ENCODE measurements at regions of chr9 and their contacts with region 1.

Region 1: GRCh38 chr9:128370826-128371621 is at the start of gene URM1:
- DNase-seq: peak; percentile 90 to 98 (median 94)
- ATAC-seq: peak; percentile 94
- H3K4me3 ChIP-seq: peak within 1 kb of the TSS; percentile 93
- H3K4me3 Mint-ChIP-seq: peak within 1 kb of the TSS; percentile 97
- H3K27ac ChIP-seq: peak within 1 kb of the TSS; percentile 68 to 92
- H3K27ac Mint-ChIP-seq: peak within 1 kb of the TSS; percentile 94
- H3K4me1 ChIP-seq: peaks cover 20% of the 10 kb centered on the region
- H3K4me1 Mint-ChIP-seq: peaks cover 34% of the 10 kb centered on the region
- H3K27me3 ChIP-seq: no peaks in the 10 kb centered on the region
- H3K27me3 Mint-ChIP-seq: no peaks in the 10 kb centered on the region
- CTCF ChIP-seq: no peak
- total RNA-seq, gene URM1: 28.4 to 28.8 TPM

Region 2: GRCh38 chr9:128203024-128203706 is 167.9 kb before region 1 on chr9 and contains the start of gene DNM1:
- CTCF ChIA-PET with region 1: no interaction called
- POLR2A ChIA-PET with region 1: no interaction called
- intact Hi-C with region 1: loop called in 1 of 2 experiments (anchors 1 kb)
- DNase-seq: peak; percentile 41 to 91 (median 65)
- ATAC-seq: peak; percentile 98
- H3K4me3 ChIP-seq: peak within 1 kb of the TSS; percentile 55
- H3K4me3 Mint-ChIP-seq: peak within 1 kb of the TSS; percentile 83
- H3K27ac ChIP-seq: no peak within 1 kb of the TSS
- H3K27ac Mint-ChIP-seq: no peak within 1 kb of the TSS
- H3K4me1 ChIP-seq: peaks cover 17% of the 10 kb centered on the region
- H3K4me1 Mint-ChIP-seq: peaks cover 5% of the 10 kb centered on the region
- H3K27me3 ChIP-seq: peaks cover 11 to 17% of the 10 kb centered on the region in 2 experiments
- H3K27me3 Mint-ChIP-seq: peaks cover 9% of the 10 kb centered on the region
- CTCF ChIP-seq: peak; percentile 72
- total RNA-seq, gene DNM1: 1.8 to 2.5 TPM

Region 3: DNA sequence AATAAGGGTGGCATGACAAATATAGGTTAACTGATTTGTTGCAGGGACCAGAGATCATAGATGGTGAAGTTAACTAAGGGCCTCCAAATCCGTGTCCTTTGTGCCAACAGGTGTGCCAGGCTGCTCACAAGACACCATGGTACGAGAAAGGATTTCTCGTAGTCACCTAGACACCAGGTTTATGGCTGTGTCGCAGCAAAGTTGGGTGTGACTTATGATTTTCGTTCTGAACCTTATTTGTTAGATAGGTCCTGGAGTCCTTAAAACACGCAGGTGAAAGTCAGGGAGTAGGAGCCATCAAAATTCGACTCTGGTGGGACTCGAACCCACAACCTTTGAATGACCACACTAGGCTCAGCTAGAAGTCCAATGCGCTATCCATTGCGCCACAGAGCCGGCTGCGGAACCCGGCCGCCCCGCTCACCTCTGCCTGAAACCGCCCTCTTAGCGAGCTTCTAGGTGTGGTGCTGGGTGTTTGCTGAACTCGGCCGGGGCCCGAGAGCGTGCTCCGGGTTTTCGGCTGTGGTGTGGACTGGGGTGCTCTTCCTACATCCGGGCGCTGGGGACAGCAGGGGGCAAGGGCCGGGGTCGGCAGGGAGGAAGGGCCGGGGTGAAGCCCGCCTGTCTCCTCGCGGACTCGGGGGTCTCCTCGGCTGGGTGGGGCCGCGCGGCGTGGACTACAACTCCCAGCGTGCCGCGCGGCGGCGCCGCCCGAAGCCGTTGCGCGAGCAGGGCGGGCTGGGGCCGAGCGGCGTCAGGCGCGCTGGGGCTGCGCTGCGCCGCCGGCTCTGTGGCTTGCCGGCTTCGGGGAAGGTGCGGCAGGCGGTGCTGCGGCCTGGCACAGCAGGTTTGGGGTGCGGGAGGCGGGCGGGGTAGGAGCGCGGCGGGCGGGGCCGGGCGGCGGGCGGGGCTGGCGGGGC is 31.0 kb before region 1 on chr9 and contains the start of gene SLC27A4:
- CTCF ChIA-PET with region 1: interaction called, 9 read pairs
- POLR2A ChIA-PET with region 1: interaction called, 9 read pairs
- intact Hi-C with region 1: loop called in 1 of 2 experiments (anchors 1 kb)
- DNase-seq: peak; percentile 61 to 94 (median 76)
- ATAC-seq: peak; percentile 92
- H3K4me3 ChIP-seq: peak within 1 kb of the TSS; percentile 75
- H3K4me3 Mint-ChIP-seq: peak within 1 kb of the TSS; percentile 98
- H3K27ac ChIP-seq: peak within 1 kb of the TSS; percentile 41 to 46
- H3K27ac Mint-ChIP-seq: peak within 1 kb of the TSS; percentile 81
- H3K4me1 ChIP-seq: peaks cover 21% of the 10 kb centered on the region
- H3K4me1 Mint-ChIP-seq: peaks cover 7% of the 10 kb centered on the region
- H3K27me3 ChIP-seq: no peaks in the 10 kb centered on the region
- H3K27me3 Mint-ChIP-seq: no peaks in the 10 kb centered on the region
- CTCF ChIP-seq: no peak
- total RNA-seq, gene SLC27A4: 2.2 to 3.1 TPM

Region 4: GRCh38 chr9:128455849-128456612 is 85.0 kb after region 1 on chr9 and contains the start of gene ODF2:
- CTCF ChIA-PET with region 1: no interaction called
- POLR2A ChIA-PET with region 1: interaction called, 3 read pairs
- intact Hi-C with region 1: loop called (anchors 5 kb)
- DNase-seq: peak; percentile 97 to 99 (median 98)
- ATAC-seq: peak; percentile 90
- H3K4me3 ChIP-seq: peak within 1 kb of the TSS; percentile 91
- H3K4me3 Mint-ChIP-seq: peak within 1 kb of the TSS; percentile 91
- H3K27ac ChIP-seq: peak within 1 kb of the TSS; percentile 83 to 86
- H3K27ac Mint-ChIP-seq: peak within 1 kb of the TSS; percentile 89
- H3K4me1 ChIP-seq: peaks cover 19% of the 10 kb centered on the region
- H3K4me1 Mint-ChIP-seq: peaks cover 11% of the 10 kb centered on the region
- H3K27me3 ChIP-seq: no peaks in the 10 kb centered on the region
- H3K27me3 Mint-ChIP-seq: no peaks in the 10 kb centered on the region
- CTCF ChIP-seq: no peak
- total RNA-seq, gene ODF2: 18.3 to 21.3 TPM

Region 5: DNA sequence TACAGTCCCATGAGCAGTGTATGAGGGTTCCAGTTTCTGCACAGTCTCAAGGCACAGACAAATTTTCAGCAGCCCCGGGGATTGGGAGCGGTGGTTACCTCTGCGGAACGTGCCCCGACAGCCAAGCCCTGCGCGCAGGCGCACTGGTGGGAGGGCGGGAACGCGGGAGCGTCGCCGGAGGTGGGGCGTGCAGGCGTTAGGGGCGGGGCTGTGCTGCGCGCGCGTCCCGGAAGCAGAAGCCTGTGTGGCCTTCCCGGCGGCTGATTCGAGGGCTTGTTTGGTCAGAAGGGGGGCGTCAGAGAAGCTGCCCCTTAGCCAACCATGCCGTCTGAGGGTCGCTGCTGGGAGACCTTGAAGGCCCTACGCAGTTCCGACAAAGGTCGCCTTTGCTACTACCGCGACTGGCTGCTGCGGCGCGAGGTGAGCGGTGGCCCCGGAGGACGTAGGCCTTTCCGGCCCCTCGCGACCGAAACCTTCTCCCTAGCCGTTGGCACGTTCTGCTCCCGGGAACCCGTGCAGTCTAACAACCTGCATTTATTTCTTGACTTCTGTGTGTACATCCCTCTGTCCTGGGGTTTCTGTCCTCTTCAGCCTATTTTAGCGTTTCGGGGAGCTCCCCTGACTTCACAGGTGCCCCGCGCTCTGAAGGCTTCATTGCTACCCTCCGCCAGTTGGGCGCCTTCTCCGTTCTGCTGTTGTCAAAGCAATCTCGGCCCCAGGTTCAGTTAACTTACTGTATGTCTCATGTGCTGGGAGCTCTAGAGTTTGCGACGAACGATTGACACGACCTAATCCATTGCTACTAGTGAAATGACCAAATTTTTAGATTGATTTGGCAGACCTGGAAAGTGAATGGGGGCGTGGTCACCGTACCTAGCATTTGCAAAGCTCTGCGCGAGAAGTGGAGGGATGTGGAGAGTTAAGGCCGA is 133.7 kb after region 1 on chr9 and contains the start of gene GLE1:
- CTCF ChIA-PET with region 1: no interaction called
- POLR2A ChIA-PET with region 1: interaction called, 8 read pairs
- intact Hi-C with region 1: loop called in 1 of 2 experiments (anchors 2 kb)
- DNase-seq: peak; percentile 93 to 99 (median 97)
- ATAC-seq: peak; percentile 94
- H3K4me3 ChIP-seq: peak within 1 kb of the TSS; percentile 99
- H3K4me3 Mint-ChIP-seq: peak within 1 kb of the TSS; percentile 100
- H3K27ac ChIP-seq: peak within 1 kb of the TSS; percentile 80 to 92
- H3K27ac Mint-ChIP-seq: peak within 1 kb of the TSS; percentile 97
- H3K4me1 ChIP-seq: peaks cover 27% of the 10 kb centered on the region
- H3K4me1 Mint-ChIP-seq: peaks cover 41% of the 10 kb centered on the region
- H3K27me3 ChIP-seq: no peaks in the 10 kb centered on the region
- H3K27me3 Mint-ChIP-seq: no peaks in the 10 kb centered on the region
- CTCF ChIP-seq: no peak
- total RNA-seq, gene GLE1: 8.0 to 8.4 TPM